Right ventricle myocardium inferior (tissue), 1 donor: ENCODE measurements at regions of chr7 and their contacts with region 1.

Region 1: GRCh38 chr7:12524794-12525386 is 45.6 kb upstream of the SCIN start:
- DNase-seq: no peak
- ATAC-seq: no peak

Region 2: GRCh38 chr7:12357508-12357907 is 167.4 kb before region 1 on chr7:
- intact Hi-C with region 1: no loop called
- DNase-seq: no peak
- ATAC-seq: no peak

Region 3: GRCh38 chr7:12623897-12624498 is 99.1 kb after region 1 on chr7:
- intact Hi-C with region 1: loop called (anchors 5 kb)
- DNase-seq: no peak
- ATAC-seq: no peak

Region 4: DNA sequence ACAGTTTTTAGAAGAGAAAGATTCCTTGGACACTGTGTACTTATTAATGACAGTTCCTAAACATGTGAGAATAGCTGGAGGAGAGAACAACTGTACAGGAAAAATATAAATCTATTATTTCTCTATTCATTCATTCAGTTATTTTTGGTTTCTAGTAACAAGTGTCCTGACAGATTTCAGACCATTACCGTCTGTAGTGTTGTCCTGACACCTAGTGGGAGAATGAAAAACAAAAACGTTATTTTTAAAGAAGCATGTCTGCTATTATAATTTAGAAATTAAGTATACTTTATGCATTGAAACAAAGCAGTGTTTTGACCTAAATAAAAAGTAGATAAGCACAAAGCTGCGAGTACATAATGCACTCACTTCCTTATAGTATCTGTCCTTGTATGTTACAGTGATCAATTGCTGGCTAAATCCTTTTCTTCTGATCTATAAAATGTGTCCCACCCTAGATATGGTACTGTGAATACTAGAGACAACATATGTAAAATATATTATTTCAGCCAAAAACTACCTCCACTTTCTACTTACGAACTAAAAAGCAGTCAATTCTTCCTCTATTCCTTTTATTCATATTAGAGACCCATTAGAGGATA is 738.1 kb after region 1 on chr7:
- intact Hi-C with region 1: loop called (anchors 2 kb)
- DNase-seq: no peak
- ATAC-seq: no peak